Activated CD4-positive, alpha-beta T cell treated with anti-CD3 and anti-CD28 coated beads, Interleukin-2, amount 10 ng/mL, durations not matched to agents 24 days and 14 days (primary cell): ENCODE measurements at regions of chr7 and their contacts with region 1.

Region 1: GRCh38 chr7:44735403-44736165 is 13.1 kb upstream of the ZMIZ2 start:
- DNase-seq: peak; percentile 81
- H3K4me3 Mint-ChIP-seq: peak overlapping the region; percentile 46
- H3K27ac Mint-ChIP-seq: peak overlapping the region; percentile 89
- H3K4me1 Mint-ChIP-seq: peaks cover 19% of the 10 kb centered on the region
- H3K27me3 Mint-ChIP-seq: no peaks in the 10 kb centered on the region

Region 2: DNA sequence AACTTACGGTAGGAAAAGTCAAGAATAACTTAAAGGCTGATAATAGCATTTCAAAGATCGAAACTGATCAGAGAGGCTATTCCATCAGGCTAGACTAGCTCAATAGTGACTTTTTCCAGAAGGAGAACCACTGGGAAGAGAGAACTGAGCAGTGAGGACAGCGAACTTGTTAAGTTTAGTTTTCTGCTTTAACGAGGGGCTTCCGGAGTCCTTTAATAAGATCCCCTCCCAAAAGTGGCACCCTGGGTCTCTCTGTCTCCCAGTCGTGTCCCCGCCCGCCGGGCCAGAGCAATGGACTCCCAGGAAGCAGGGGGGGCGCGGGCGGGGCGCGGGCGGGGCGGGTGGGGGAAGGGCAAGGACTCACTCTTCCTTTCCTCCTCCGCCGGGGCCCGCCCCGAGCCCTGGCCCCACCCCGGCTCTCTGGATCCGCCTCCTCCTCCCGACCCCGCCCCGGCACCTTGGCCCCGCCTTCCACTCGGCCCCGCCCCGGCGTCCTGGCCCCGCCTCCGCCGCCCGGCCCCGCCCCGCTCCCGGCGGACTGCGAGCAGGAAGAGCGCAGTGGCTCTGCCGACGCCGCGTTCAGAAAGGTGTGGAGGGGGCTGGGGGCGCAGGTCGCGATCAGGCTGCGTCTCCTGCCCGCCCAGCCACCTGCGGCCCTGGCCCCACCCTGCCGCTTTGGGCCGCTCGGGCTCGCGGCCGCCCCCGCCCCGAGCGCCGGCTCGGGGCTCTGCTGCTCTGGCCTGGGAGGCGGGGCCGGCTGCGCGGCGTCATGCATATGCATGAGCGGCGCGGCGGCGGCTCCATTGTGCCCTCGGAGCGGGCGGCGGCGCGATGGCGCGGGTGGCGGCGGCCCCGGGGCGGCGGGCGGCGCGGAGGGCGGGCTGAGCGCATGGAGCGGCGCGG is 12.7 kb after region 1 on chr7 and contains the start of gene ZMIZ2:
- intact Hi-C with region 1: loop called (anchors 1 kb)
- DNase-seq: peak; percentile 97
- H3K4me3 Mint-ChIP-seq: peak within 1 kb of the TSS; percentile 93
- H3K27ac Mint-ChIP-seq: peak within 1 kb of the TSS; percentile 89
- H3K4me1 Mint-ChIP-seq: peaks cover 33% of the 10 kb centered on the region
- H3K27me3 Mint-ChIP-seq: no peaks in the 10 kb centered on the region
- total RNA-seq, gene ZMIZ2: 130 and 133 TPM in 2 replicates